Calu3 (cell line): ENCODE measurements at regions of chr9 and their contacts with region 1.

Region 1: DNA sequence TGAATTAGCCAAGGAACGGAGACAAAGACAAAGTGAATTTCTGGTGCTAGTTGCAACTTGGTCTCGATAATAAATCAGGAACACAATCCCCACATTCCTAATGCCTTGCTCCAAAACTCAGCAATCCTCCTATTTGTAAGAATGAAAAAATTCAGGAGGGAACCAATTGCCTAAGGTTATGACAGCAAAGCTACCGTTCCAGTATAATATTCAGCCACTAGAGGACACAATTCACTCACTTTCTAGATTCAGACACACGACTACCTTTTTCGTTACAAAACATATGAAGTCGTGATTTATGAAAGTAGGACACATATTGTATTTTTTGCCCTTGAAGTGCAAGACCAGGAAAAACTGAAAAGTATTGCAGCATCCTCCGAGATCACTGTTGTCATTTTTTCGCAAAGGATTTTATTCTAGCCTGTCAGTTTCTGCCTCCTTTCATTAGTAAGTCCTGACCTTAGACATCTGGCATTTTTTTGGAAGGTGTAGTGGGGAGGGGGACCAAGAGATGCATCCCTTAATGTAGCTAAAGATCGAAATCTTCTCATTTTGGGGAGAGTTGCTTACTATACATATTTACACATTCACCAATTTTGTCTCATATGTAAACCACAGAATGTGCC is 133.1 kb downstream of the DOCK8 start:
- DNase-seq: no peak
- H3K4me3 Mint-ChIP-seq: no peak overlapping the region
- H3K27ac Mint-ChIP-seq: no peak overlapping the region
- H3K4me1 Mint-ChIP-seq: no peaks in the 10 kb centered on the region
- H3K27me3 Mint-ChIP-seq: peaks cover 62% of the 10 kb centered on the region
- CTCF ChIP-seq: peak; percentile 40

Region 2: GRCh38 chr9:385818-386398 is 38.1 kb after region 1 on chr9:
- CTCF ChIA-PET with region 1: no interaction called
- intact Hi-C with region 1: no loop called
- DNase-seq: peak; percentile 49
- H3K4me3 Mint-ChIP-seq: no peak overlapping the region
- H3K27ac Mint-ChIP-seq: no peak overlapping the region
- H3K4me1 Mint-ChIP-seq: no peaks in the 10 kb centered on the region
- H3K27me3 Mint-ChIP-seq: peaks cover 8% of the 10 kb centered on the region
- CTCF ChIP-seq: peak; percentile 64

Region 3: DNA sequence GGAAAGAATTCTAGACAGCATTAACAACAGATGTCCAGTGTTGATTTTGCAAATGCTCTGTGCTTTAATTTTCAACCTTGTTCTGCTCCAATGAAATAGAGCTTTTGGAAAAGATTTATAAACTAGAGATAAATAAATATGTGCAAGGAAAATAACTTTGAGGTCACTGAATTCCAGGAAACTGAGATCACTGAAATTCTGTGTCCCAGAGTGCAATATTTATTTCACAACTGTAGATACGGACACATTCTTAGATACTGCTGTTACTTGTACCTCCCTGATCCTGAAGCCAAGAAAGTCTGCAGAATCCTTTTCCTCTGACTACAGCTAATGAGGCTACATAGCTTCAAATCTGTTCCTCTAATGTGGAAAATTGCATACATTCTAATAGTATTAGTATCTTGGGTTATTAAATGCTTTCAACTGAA is 89.8 kb after region 1 on chr9:
- CTCF ChIA-PET with region 1: no interaction called
- intact Hi-C with region 1: no loop called
- DNase-seq: no peak
- H3K4me3 Mint-ChIP-seq: no peak overlapping the region
- H3K27ac Mint-ChIP-seq: no peak overlapping the region
- H3K4me1 Mint-ChIP-seq: no peaks in the 10 kb centered on the region
- H3K27me3 Mint-ChIP-seq: peaks cover 37% of the 10 kb centered on the region
- CTCF ChIP-seq: no peak

Region 4: DNA sequence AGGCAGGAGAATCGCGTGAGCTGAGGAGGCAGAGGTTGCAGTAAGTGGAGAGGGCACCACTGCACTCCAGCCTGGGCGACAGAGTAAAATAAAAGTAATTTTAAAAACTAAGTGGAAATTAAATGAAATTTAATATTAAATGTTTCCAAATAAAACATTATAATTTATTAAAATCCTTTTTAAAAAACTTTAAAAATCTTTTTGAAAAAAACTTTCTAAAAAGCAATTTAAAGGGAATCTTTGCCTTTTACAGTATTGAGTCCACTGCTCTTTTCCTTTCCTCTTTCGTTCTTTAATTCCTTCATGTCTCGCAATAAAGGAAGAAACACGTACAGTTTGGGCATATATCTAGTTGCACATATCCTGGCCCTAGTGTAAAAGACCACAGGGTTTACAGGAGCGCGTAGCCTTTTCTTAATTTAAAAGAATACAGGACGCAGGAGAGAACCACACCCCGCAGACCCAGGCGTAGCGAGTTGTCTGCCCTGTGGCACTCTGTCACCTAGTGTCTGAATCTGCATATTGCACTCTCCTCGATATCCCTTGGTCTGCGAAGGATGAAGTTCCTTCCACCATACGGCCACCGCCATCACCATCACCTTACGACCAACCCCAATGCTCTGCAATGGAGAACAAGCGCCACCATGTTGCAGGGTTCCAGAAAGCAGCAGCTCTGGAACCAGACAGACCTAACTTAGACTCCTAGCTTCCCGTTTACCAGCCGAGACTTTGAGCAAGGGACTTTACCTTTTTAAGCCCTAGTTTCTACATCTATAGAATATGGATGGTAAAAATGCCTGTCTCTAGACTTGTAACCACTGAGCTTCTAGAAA is 416.1 kb after region 1 on chr9:
- CTCF ChIA-PET with region 1: interaction called, 4 read pairs
- intact Hi-C with region 1: loop called (anchors 2 kb)
- DNase-seq: peak; percentile 75
- H3K4me3 Mint-ChIP-seq: no peak overlapping the region
- H3K27ac Mint-ChIP-seq: no peak overlapping the region
- H3K4me1 Mint-ChIP-seq: peaks cover 7% of the 10 kb centered on the region
- H3K27me3 Mint-ChIP-seq: peaks cover 40% of the 10 kb centered on the region
- CTCF ChIP-seq: peak; percentile 66

Region 5: GRCh38 chr9:806285-807156 is 458.7 kb after region 1 on chr9:
- CTCF ChIA-PET with region 1: no interaction called
- intact Hi-C with region 1: loop called (anchors 5 kb)
- DNase-seq: peak; percentile 2
- H3K4me3 Mint-ChIP-seq: no peak overlapping the region
- H3K27ac Mint-ChIP-seq: no peak overlapping the region
- H3K4me1 Mint-ChIP-seq: no peaks in the 10 kb centered on the region
- H3K27me3 Mint-ChIP-seq: peaks cover 12% of the 10 kb centered on the region
- CTCF ChIP-seq: no peak

Region 6: DNA sequence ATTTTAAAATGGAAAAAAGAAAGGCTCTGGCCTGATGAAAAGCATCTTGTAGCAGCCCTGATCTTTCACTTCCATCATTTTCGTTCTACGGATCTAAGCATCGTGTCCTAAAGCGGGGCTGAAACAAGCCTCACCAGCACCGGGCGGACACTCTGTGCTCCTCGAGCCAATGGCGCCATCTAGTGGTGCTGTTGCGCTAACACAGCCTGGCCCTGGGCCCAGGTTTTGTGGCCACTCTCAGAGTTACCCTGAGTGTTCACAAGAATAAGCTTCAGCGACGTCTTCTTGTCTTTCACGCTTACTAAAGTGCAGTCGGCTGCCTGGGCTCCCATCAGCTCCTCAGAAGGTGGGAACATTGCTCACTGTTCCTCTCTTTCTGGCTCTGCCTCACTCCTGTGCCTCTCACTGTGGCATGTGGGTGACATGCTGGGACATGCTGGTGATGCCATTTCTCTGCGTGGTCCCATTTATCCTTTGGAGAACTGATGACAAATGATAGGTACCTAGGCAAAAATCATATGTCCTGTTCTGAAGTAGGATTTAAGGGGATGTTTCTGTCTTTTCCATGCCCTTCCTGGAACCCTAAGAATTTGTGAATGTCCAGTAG is 661.4 kb after region 1 on chr9:
- CTCF ChIA-PET with region 1: interaction called, 3 read pairs
- intact Hi-C with region 1: loop called (anchors 5 kb)
- DNase-seq: peak; percentile 82
- H3K4me3 Mint-ChIP-seq: no peak overlapping the region
- H3K27ac Mint-ChIP-seq: no peak overlapping the region
- H3K4me1 Mint-ChIP-seq: no peaks in the 10 kb centered on the region
- H3K27me3 Mint-ChIP-seq: peaks cover 12% of the 10 kb centered on the region
- CTCF ChIP-seq: peak; percentile 77